HepG2 (cell line): ENCODE measurements at regions of chr9 and their contacts with region 1.

Region 1: DNA sequence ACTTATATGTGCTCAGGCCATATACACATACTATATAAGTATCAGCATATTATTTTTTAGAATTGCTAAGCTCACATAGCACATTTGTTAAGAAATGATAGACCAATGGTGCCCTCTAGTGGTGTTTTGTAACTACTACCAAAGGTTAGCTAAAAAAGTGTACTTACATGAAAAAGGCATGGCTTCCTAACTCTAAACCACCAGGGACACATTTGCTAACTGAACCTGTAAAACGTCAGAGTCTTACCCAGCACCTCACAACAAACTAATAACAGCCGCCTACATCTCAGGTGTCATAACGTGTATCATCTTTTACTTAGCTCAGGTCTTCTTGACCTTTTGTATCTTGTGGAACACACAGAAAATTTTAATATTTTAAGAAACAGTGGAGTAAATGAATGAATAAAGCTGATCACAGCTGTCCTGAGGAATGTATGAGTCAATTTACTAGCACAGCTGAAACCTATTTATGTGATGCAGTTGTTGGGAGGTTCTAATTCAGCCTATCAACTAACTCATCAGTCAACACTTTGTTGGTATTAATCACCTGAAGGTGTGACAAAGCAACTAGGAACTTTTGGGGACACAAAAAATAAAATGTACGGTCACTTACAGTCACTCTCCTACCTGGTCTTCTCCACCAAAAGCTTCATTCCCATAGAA is 72.9 kb downstream of the BAAT start:
- DNase-seq: peak; percentile 93
- ATAC-seq: peak; percentile 47
- H3K4me3 ChIP-seq: no peak overlapping the region
- H3K27ac ChIP-seq: peak overlapping the region; percentile 27
- H3K4me1 ChIP-seq: peaks cover 55% of the 10 kb centered on the region
- H3K27me3 ChIP-seq: no peaks in the 10 kb centered on the region
- CTCF ChIP-seq: peak; percentile 87
- EP300 ChIP-seq: no peak
- POLR2A ChIP-seq: no peak
- RAD21 ChIP-seq: peak; percentile 94

Region 2: DNA sequence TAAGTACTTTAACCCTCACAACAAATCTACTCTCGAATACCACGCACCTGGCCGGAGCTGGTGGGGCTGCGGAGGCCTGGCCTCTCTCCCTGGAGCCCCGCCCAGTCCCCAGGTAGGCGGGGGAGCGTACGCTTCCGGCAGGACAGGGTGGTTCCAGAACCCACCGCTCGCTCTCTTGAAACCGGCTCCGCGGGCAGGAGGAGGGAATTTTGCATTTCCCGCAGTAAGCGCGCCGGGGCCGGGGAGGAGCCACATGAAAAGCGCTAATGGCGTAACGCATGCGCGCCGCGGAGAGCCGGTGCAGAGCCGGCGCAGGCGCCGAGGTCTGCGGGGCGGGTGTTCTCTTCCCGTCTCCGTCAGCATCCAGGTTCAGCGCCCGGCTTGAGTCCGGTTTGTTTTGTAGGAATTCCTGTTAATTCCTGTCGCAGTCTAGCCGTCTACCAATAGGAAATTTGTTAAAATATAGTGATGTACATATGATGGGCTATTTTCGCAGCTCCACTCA is 713.2 kb before region 1 on chr9:
- CTCF ChIA-PET with region 1: interaction called, 33 read pairs
- POLR2A ChIA-PET with region 1: interaction called, 10 read pairs
- in situ Hi-C with region 1: loop called (anchors 5 kb)
- intact Hi-C with region 1: loop called (anchors 1 kb)
- DNase-seq: peak; percentile 69
- ATAC-seq: peak; percentile 82
- H3K4me3 ChIP-seq: peak overlapping the region; percentile 61 to 73 (median 62)
- H3K27ac ChIP-seq: no peak overlapping the region
- H3K4me1 ChIP-seq: peaks cover 24% of the 10 kb centered on the region
- H3K27me3 ChIP-seq: no peaks in the 10 kb centered on the region
- CTCF ChIP-seq: no peak
- EP300 ChIP-seq: no peak
- POLR2A ChIP-seq: peak in 1 of 2 experiments; percentile 53; a peak in 1 of 4 replicates
- RAD21 ChIP-seq: no peak

Region 3: DNA sequence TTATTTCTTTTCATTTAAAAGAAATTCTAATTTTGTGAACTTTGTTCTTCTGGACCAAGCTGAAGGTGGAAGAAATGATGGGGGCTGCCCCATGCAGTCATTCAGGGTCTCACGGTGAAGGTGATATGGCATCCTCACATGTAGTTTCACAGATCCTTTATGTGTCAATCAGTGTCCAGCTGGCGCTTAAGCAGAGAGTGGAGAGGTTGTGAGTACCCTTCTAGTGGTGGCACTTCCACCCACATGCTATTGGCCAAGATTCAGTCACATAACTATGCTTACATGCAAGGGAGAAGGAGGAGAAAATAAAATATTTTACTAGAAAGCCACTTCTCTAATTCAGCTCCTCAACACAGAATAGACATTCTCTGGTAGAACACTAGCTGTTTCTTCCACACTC is 248.7 kb before region 1 on chr9:
- CTCF ChIA-PET with region 1: no interaction called
- POLR2A ChIA-PET with region 1: no interaction called
- in situ Hi-C with region 1: no loop called
- intact Hi-C with region 1: loop called (anchors 1 kb)
- DNase-seq: no peak
- ATAC-seq: peak; percentile 57
- H3K4me3 ChIP-seq: no peak overlapping the region; a peak in 1 of 6 replicates
- H3K27ac ChIP-seq: peak overlapping the region; percentile 64
- H3K4me1 ChIP-seq: peaks cover 42% of the 10 kb centered on the region
- H3K27me3 ChIP-seq: no peaks in the 10 kb centered on the region
- CTCF ChIP-seq: no peak
- EP300 ChIP-seq: no peak
- POLR2A ChIP-seq: no peak
- RAD21 ChIP-seq: no peak

Region 4: GRCh38 chr9:101326501-101326900 is 14.6 kb after region 1 on chr9:
- CTCF ChIA-PET with region 1: no interaction called
- POLR2A ChIA-PET with region 1: interaction called, 75 read pairs
- in situ Hi-C with region 1: no loop called
- intact Hi-C with region 1: loop called (anchors 1 kb)
- DNase-seq: peak; percentile 16
- ATAC-seq: no peak
- H3K4me3 ChIP-seq: no peak overlapping the region
- H3K27ac ChIP-seq: peak overlapping the region; percentile 97
- H3K4me1 ChIP-seq: peaks cover 74% of the 10 kb centered on the region
- H3K27me3 ChIP-seq: no peaks in the 10 kb centered on the region
- CTCF ChIP-seq: no peak
- EP300 ChIP-seq: peak in 1 of 2 experiments; percentile 66; a peak in 1 of 4 replicates
- POLR2A ChIP-seq: peak in 1 of 2 experiments; percentile 48; a peak in 1 of 4 replicates
- RAD21 ChIP-seq: no peak

Region 5: DNA sequence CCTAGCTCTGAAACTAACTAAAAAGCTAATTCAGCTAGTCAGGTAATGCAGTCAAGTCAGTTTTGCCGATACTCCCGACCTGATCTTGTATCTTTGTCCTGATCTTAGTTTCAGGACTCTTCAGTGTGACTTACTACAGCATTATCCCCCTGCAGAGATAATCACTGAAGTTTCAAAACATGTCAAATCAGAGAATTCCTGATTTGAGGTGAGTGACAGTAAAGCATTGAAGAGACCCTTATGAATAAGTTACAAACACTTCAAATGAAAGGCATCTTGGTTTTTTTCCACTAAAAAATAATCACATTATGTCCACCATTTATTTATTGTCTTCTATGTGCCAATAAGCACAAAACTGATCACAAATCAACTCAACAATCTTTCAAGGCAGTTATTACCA is 25.3 kb after region 1 on chr9:
- CTCF ChIA-PET with region 1: no interaction called
- POLR2A ChIA-PET with region 1: no interaction called
- in situ Hi-C with region 1: no loop called
- intact Hi-C with region 1: no loop called
- DNase-seq: no peak
- ATAC-seq: no peak
- H3K4me3 ChIP-seq: no peak overlapping the region
- H3K27ac ChIP-seq: no peak overlapping the region
- H3K4me1 ChIP-seq: peaks cover 22% of the 10 kb centered on the region
- H3K27me3 ChIP-seq: no peaks in the 10 kb centered on the region
- CTCF ChIP-seq: no peak
- EP300 ChIP-seq: no peak
- POLR2A ChIP-seq: no peak
- RAD21 ChIP-seq: no peak

Region 6: DNA sequence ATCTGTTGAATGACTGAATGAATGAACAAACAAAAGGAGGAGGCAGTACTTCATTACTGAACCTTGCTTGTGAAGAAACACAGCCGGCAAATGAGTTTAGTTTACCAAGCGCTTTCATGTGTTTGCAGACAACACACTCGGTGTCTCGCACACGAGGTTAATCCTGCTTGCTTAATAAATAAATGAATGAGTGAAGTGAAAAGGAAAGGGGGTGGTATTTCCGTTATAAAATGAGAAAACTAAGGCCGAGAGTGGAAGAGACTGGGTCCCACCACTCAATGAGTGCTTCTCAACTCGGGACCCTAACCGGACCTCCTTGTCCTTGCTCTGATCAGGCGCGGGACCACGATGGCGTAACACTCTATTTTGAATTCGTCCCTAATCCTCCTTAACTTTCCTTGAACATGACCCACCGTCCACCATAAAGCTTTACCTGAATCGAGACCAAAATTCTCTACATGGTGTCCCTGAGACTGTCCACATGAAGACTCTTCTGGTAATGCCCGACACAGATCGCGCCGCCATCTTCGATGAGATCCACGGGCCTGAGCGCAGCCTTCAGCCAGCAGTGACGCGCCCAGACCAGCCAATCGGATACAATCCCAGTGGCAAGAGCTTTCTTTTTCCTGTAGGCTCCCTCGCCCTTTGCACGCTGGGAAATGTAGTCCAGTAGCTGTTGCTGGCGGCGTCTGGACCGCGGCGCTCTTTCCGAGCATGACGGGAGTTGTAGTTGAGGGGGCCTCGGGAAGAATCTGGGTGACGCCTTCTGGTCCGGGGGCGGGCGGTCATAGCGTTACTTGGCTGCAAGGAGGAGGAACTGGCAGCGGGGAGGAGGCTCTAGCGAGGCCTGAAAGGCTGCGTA is 86.4 kb after region 1 on chr9 and contains the starts of genes MRPL50 and ZNF189:
- CTCF ChIA-PET with region 1: no interaction called
- POLR2A ChIA-PET with region 1: interaction called, 14 read pairs
- in situ Hi-C with region 1: no loop called
- intact Hi-C with region 1: no loop called
- DNase-seq: peak; percentile 100
- ATAC-seq: peak; percentile 99
- H3K4me3 ChIP-seq: peak within 1 kb of the TSS; percentile 82 to 90 (median 86)
- H3K27ac ChIP-seq: peak within 1 kb of the TSS; percentile 85
- H3K4me1 ChIP-seq: peaks cover 74% of the 10 kb centered on the region
- H3K27me3 ChIP-seq: no peaks in the 10 kb centered on the region; a peak in 1 of 5 replicates
- CTCF ChIP-seq: 0 out of 2 replicates have a peak, but pooled peaks have one; percentile 32
- EP300 ChIP-seq: peak in 1 of 2 experiments; percentile 48; a peak in 1 of 4 replicates
- POLR2A ChIP-seq: peak; percentile 85 to 98
- RAD21 ChIP-seq: peak; percentile 57
- total RNA-seq, gene MRPL50: 70.0 and 107 TPM in 2 replicates
- total RNA-seq, gene ZNF189: 50.0 and 65.4 TPM in 2 replicates

Region 7: DNA sequence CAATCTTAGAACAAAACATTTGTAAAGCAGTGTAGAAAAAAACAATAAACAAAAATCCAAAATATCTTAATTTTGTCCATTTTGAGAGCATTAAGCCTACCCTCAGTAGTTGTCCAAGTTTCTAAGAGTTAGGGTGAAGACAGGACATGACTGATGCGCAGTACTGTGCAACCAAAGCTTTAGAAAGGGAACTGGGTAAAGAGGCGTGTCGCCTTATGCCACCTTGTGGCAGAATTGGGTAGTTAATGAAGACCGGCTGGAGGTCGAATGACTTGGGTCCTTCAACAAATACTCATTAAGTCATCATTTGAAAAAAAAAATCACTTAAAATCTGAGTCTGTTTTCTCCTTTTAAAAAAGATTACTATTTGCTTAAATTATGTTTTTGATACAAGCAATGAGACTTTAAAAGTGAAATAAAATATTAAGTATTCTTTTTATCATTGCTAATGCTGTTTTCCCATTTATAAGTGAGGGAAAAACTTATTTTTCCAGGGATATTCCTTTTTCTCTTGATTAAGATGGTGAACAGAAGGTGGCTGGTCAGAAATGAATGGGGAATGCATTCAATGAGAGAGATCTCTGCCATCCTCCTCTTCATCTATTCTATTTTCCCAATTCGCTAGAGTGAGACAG is 218.3 kb after region 1 on chr9:
- CTCF ChIA-PET with region 1: no interaction called
- POLR2A ChIA-PET with region 1: no interaction called
- in situ Hi-C with region 1: no loop called
- intact Hi-C with region 1: loop called (anchors 10 kb)
- DNase-seq: peak; percentile 67
- ATAC-seq: peak; percentile 45
- H3K4me3 ChIP-seq: no peak overlapping the region
- H3K27ac ChIP-seq: no peak overlapping the region
- H3K4me1 ChIP-seq: peaks cover 13% of the 10 kb centered on the region
- H3K27me3 ChIP-seq: no peaks in the 10 kb centered on the region; a peak in 2 of 5 replicates
- CTCF ChIP-seq: peak; percentile 81
- EP300 ChIP-seq: no peak
- POLR2A ChIP-seq: no peak
- RAD21 ChIP-seq: peak; percentile 47; the same call in 1 of the 2 replicates